ENCODE measurements at regions of chr7 and their contacts with region 1.

Region 1: DNA sequence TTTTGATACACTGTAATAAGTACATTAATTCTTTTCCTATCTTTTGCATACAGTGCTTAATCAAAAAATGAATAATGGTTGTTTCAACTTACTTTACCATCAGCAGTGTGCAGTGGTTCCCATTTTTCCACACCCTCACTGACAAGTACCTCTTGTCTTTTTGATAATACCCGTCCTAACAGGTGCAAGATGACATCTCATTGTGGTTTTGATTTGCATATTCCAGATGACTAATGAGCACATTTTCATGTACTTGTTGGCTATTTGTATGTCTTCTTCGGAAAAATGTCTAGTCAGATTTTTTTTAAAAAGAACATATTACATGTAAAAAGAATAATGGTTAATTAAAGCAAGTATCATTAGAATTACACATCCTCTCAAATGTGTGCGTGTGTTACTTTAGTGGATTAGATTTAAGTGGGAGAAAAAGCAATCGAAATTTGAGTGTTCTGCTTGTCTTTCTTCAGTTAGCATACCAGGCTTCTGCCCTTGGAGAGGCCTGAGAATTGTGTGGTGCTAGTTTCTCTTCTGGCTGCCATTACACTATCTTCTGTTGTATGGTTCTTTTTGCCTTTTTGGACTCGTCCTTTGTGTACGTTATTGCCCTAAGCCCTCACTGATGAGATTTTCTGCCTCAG is 291.2 kb downstream of the AUTS2 start:
- DNase-seq: no peak
- ATAC-seq: no peak
- H3K4me3 ChIP-seq: no peak overlapping the region
- H3K4me3 Mint-ChIP-seq: no peak overlapping the region
- H3K27ac ChIP-seq: no peak overlapping the region
- H3K27ac Mint-ChIP-seq: no peak overlapping the region
- H3K4me1 ChIP-seq: no peaks in the 10 kb centered on the region
- H3K4me1 Mint-ChIP-seq: no peaks in the 10 kb centered on the region
- H3K27me3 ChIP-seq: no peaks in the 10 kb centered on the region
- H3K27me3 Mint-ChIP-seq: peaks cover 0 to 4% of the 10 kb centered on the region in 2 donors

Region 2: GRCh38 chr7:69035826-69036225 is 853.6 kb before region 1 on chr7:
- CTCF ChIA-PET with region 1: interaction called in 1 of 2 experiments, 10 read pairs
- POLR2A ChIA-PET with region 1: no interaction called
- DNase-seq: no peak
- ATAC-seq: no peak
- H3K4me3 ChIP-seq: no peak overlapping the region
- H3K4me3 Mint-ChIP-seq: no peak overlapping the region
- H3K27ac ChIP-seq: no peak overlapping the region
- H3K27ac Mint-ChIP-seq: no peak overlapping the region
- H3K4me1 ChIP-seq: no peaks in the 10 kb centered on the region
- H3K4me1 Mint-ChIP-seq: no peaks in the 10 kb centered on the region
- H3K27me3 ChIP-seq: no peaks in the 10 kb centered on the region
- H3K27me3 Mint-ChIP-seq: no peaks in the 10 kb centered on the region

Measured in T-cell (primary cell).